ENCODE measurements at regions of chr5 and their contacts with region 1.

Region 1: GRCh38 chr5:34045996-34046395 is 3.0 kb upstream of the C1QTNF3 start:
- DNase-seq: no peak
- ATAC-seq: no peak
- H3K4me3 ChIP-seq: no peak overlapping the region
- H3K4me3 Mint-ChIP-seq: peak overlapping the region; percentile 70
- H3K27ac ChIP-seq: no peak overlapping the region
- H3K27ac Mint-ChIP-seq: peak overlapping the region; percentile 89 to 93
- H3K4me1 ChIP-seq: peaks cover 37% of the 10 kb centered on the region
- H3K4me1 Mint-ChIP-seq: peaks cover 69 to 85% of the 10 kb centered on the region in 2 donors
- H3K27me3 ChIP-seq: no peaks in the 10 kb centered on the region
- H3K27me3 Mint-ChIP-seq: no peaks in the 10 kb centered on the region
- CTCF ChIP-seq: no peak

Region 2: GRCh38 chr5:34007621-34008600 is 38.1 kb before region 1 on chr5 and contains the start of gene AMACR:
- intact Hi-C with region 1: loop called (anchors 1 kb)
- DNase-seq: peak; percentile 80 to 90
- ATAC-seq: peak; percentile 87 to 93 (median 88)
- H3K4me3 ChIP-seq: peak within 1 kb of the TSS; percentile 85
- H3K4me3 Mint-ChIP-seq: peak within 1 kb of the TSS; percentile 84
- H3K27ac ChIP-seq: peak within 1 kb of the TSS; percentile 91
- H3K27ac Mint-ChIP-seq: peak within 1 kb of the TSS; percentile 80 to 84
- H3K4me1 ChIP-seq: peaks cover 9% of the 10 kb centered on the region
- H3K4me1 Mint-ChIP-seq: peaks cover 30 to 34% of the 10 kb centered on the region in 2 donors
- H3K27me3 ChIP-seq: no peaks in the 10 kb centered on the region
- H3K27me3 Mint-ChIP-seq: no peaks in the 10 kb centered on the region
- CTCF ChIP-seq: no peak
- total RNA-seq, gene AMACR: 2.7 to 3.8 (median 2.9) TPM

Region 3: GRCh38 chr5:34062419-34062818 is 16.4 kb after region 1 on chr5:
- intact Hi-C with region 1: no loop called
- DNase-seq: no peak
- ATAC-seq: no peak
- H3K4me3 ChIP-seq: no peak overlapping the region
- H3K4me3 Mint-ChIP-seq: no peak overlapping the region
- H3K27ac ChIP-seq: no peak overlapping the region
- H3K27ac Mint-ChIP-seq: no peak overlapping the region
- H3K4me1 ChIP-seq: no peaks in the 10 kb centered on the region
- H3K4me1 Mint-ChIP-seq: peaks cover 1 to 14% of the 10 kb centered on the region in 2 donors
- H3K27me3 ChIP-seq: no peaks in the 10 kb centered on the region
- H3K27me3 Mint-ChIP-seq: no peaks in the 10 kb centered on the region
- CTCF ChIP-seq: no peak